Heart right ventricle (tissue), 16 donors: ENCODE measurements at regions of chr3 and their contacts with region 1.

Region 1: GRCh38 chr3:161253711-161254110 is 32.6 kb downstream of the NMD3 start:
- DNase-seq: no peak
- ATAC-seq: peak in 3 of 8 donors; percentile 28 to 37 (median 28)
- H3K4me3 ChIP-seq: no peak overlapping the region
- H3K27ac ChIP-seq: peak overlapping the region in 1 of 10 donors; percentile 32
- H3K4me1 ChIP-seq: peaks cover 0 to 28% (median 16%) of the 10 kb centered on the region in 9 donors
- H3K27me3 ChIP-seq: no peaks in the 10 kb centered on the region
- CTCF ChIP-seq: no peak

Region 2: DNA sequence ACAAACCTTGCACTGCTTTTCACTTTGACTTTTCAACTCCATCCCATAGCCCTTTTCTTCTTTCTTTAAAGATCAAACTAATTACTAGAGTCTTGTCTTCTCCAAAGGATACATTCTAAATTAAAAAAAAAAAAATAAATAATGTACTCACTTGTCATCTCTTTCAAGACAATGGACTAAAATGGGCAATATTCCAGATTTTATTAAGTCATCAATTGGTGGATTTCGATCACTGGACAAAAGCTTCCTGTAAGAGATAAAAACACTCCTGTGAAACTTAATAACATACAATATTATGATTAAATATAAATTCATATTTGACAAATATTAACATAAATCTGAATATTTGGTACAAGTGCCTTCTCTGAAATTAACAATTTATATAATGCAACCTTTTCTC is 722.4 kb before region 1 on chr3:
- intact Hi-C with region 1: loop called in 1 of 10 experiments (anchors 10 kb)
- DNase-seq: no peak
- ATAC-seq: no peak
- H3K4me3 ChIP-seq: no peak overlapping the region
- H3K27ac ChIP-seq: no peak overlapping the region
- H3K4me1 ChIP-seq: peaks cover 0 to 17% (median 9%) of the 10 kb centered on the region in 9 donors
- H3K27me3 ChIP-seq: no peaks in the 10 kb centered on the region
- CTCF ChIP-seq: no peak

Region 3: GRCh38 chr3:161208931-161209330 is 44.8 kb before region 1 on chr3:
- intact Hi-C with region 1: no loop called
- DNase-seq: no peak
- ATAC-seq: no peak
- H3K4me3 ChIP-seq: no peak overlapping the region
- H3K27ac ChIP-seq: no peak overlapping the region
- H3K4me1 ChIP-seq: no peaks in the 10 kb centered on the region
- H3K27me3 ChIP-seq: no peaks in the 10 kb centered on the region
- CTCF ChIP-seq: no peak

Region 4: DNA sequence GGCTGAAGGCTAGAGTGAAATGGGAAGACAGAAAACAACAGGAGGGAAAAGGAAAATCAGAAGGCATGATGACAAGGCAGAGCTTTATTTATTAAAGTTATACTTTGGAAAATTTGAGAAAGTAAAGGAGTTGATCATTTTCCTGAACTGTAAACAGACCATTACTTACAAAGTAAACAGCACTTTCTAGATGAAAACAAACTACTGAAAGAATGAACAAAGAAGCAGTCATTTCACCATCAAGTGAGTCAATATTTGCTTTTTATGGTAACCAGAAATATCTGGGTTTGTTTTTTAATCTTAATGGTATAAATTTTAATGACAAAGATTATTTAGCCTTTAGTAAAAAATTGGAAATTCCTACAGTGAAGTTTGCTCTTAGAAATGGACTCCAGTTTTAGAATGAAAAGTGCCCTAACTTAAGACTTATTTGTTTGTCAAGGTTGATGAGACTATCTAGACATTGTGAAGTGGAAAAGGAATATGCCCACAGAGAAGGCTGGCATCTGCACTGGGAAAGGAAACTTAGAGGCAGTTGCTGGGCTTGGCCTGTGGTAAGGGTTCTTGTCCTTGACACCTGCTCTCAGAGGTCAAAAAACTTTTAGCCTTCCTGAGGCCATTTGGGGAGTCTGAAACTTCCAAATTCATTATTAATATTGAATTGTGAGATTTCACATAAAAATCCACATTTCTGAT is 70.4 kb after region 1 on chr3:
- intact Hi-C with region 1: no loop called
- DNase-seq: no peak
- ATAC-seq: no peak
- H3K4me3 ChIP-seq: no peak overlapping the region
- H3K27ac ChIP-seq: no peak overlapping the region
- H3K4me1 ChIP-seq: no peaks in the 10 kb centered on the region
- H3K27me3 ChIP-seq: no peaks in the 10 kb centered on the region
- CTCF ChIP-seq: no peak

Region 5: DNA sequence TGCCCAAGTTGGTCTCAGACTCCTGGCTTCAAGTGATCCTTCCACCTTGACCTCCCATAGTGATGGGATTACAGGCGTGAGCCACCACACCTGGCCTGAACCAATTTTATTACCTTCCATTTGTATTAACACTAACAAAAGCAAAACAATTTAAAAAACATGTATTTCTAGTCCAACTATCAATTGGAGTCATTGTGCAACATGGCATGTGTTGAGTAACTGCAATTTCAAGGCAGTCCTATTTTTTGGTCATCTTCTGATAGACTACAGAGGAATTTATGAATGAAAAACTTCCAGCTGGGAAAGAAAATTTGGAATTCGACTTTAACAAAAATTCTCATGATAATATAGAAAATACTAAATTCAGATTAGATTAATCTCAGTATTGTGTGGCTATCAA is 100.8 kb after region 1 on chr3:
- intact Hi-C with region 1: no loop called
- DNase-seq: no peak
- ATAC-seq: no peak
- H3K4me3 ChIP-seq: no peak overlapping the region
- H3K27ac ChIP-seq: no peak overlapping the region
- H3K4me1 ChIP-seq: peaks cover 0 to 8% (median 0%) of the 10 kb centered on the region in 9 donors
- H3K27me3 ChIP-seq: no peaks in the 10 kb centered on the region
- CTCF ChIP-seq: no peak

Region 6: GRCh38 chr3:162699291-162699690 is 1445.6 kb after region 1 on chr3:
- intact Hi-C with region 1: loop called in 1 of 10 experiments (anchors 5 kb)
- DNase-seq: no peak
- ATAC-seq: no peak
- H3K4me3 ChIP-seq: no peak overlapping the region
- H3K27ac ChIP-seq: no peak overlapping the region
- H3K4me1 ChIP-seq: no peaks in the 10 kb centered on the region
- H3K27me3 ChIP-seq: no peaks in the 10 kb centered on the region
- CTCF ChIP-seq: no peak